ENCODE measurements at regions of chr3 and their contacts with region 1.

Region 1: GRCh38 chr3:98817547-98818041 is 54.5 kb downstream of the ST3GAL6 start:
- DNase-seq: peak in 3 of 14 experiments; percentile 32 to 53 (median 52)
- ATAC-seq: peak; percentile 80
- H3K4me3 ChIP-seq: no peak overlapping the region
- H3K4me3 Mint-ChIP-seq: no peak overlapping the region
- H3K27ac ChIP-seq: no peak overlapping the region
- H3K27ac Mint-ChIP-seq: no peak overlapping the region
- H3K4me1 ChIP-seq: no peaks in the 10 kb centered on the region
- H3K4me1 Mint-ChIP-seq: no peaks in the 10 kb centered on the region
- H3K27me3 ChIP-seq: no peaks in the 10 kb centered on the region
- H3K27me3 Mint-ChIP-seq: no peaks in the 10 kb centered on the region
- CTCF ChIP-seq: peak; percentile 72

Region 2: DNA sequence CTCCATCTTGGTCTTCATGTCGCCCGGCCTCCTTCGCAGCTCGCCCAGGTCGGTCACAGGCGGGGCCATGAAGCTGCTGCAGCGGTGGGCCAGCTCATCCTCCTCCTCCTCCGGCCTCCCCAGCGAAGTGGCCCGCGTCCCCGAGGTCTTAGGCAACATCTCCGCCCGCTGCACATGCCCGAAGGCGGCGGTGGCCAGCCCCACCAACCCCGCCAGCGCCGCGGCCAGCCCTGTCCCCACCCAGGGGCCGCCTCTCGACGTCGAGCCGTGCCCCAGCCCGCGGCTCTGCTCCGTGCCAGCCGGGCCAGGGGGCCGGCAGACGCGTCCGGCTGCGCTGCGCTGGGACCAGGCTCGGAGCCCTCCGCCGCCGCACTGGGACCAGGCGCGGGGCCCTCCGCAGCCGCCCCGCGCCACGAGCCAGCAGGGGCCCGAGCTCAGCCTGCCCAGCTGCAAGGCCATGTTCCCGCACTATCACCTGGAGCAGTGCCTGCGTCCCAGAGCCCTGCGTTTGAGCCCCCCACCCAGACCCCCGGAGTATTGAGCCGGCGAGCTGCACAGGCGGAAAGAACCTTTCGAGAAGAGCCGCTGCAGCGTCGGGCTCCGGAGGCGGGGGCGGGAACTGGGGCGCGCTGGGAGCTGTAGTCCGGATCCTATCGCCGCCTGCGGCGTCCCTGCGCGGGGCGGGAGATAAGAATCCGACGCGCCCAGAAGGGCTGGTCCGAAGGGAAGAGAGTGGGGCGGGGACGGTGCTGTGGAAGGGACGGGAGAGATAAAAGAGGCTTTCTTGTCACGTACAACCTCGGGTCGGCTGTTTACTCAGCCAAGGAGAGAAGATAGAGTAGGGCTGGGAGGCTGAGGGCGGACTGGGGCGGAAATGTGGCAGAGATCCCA is 224.3 kb before region 1 on chr3 and contains the start of gene CPOX:
- CTCF ChIA-PET with region 1: no interaction called
- POLR2A ChIA-PET with region 1: no interaction called
- intact Hi-C with region 1: loop called in 1 of 2 experiments (anchors 5 kb)
- DNase-seq: peak; percentile 61 to 91 (median 79)
- ATAC-seq: peak; percentile 96
- H3K4me3 ChIP-seq: peak within 1 kb of the TSS; percentile 63
- H3K4me3 Mint-ChIP-seq: peak within 1 kb of the TSS; percentile 94
- H3K27ac ChIP-seq: peak within 1 kb of the TSS in 1 of 2 donors; percentile 19
- H3K27ac Mint-ChIP-seq: peak within 1 kb of the TSS; percentile 82
- H3K4me1 ChIP-seq: peaks cover 16% of the 10 kb centered on the region
- H3K4me1 Mint-ChIP-seq: peaks cover 35% of the 10 kb centered on the region
- H3K27me3 ChIP-seq: no peaks in the 10 kb centered on the region
- H3K27me3 Mint-ChIP-seq: no peaks in the 10 kb centered on the region
- CTCF ChIP-seq: no peak
- total RNA-seq, gene CPOX: 7.0 to 10.5 TPM

Region 3: GRCh38 chr3:98798820-98799219 is 18.8 kb before region 1 on chr3:
- CTCF ChIA-PET with region 1: no interaction called
- POLR2A ChIA-PET with region 1: no interaction called
- intact Hi-C with region 1: no loop called
- DNase-seq: no peak
- ATAC-seq: no peak
- H3K4me3 ChIP-seq: no peak overlapping the region
- H3K4me3 Mint-ChIP-seq: no peak overlapping the region
- H3K27ac ChIP-seq: no peak overlapping the region
- H3K27ac Mint-ChIP-seq: no peak overlapping the region
- H3K4me1 ChIP-seq: no peaks in the 10 kb centered on the region
- H3K4me1 Mint-ChIP-seq: no peaks in the 10 kb centered on the region
- H3K27me3 ChIP-seq: no peaks in the 10 kb centered on the region
- H3K27me3 Mint-ChIP-seq: no peaks in the 10 kb centered on the region
- CTCF ChIP-seq: no peak

Region 4: DNA sequence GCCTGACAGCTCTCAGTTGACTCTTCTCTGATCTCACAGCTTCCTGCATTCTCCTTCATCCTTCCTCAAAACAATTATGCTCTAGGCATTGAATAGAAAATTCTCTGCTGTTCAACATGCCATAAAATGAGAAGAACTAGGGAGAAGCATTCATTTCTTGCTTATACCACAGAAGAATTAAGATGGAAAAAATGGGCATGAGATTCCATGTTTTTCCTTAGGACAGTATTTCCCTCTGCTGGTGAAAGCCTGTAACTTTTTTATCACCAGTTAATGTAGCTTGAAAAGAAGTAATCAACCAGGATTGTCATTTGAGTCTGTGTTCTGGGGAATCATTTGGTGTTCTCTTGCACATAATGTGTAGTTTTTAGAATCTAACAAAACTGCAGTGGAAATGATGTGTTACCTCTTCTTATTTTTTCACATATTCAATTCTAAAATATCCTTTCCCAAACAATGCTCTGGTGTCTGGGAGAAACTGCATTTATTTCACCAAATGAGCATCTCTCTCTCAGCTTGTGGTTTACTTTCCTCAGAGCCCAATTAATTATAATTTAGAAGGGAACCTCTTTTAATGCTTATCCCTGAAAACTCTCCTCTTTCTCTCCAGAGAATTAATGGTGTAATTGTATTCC is 176.7 kb after region 1 on chr3:
- CTCF ChIA-PET with region 1: no interaction called
- POLR2A ChIA-PET with region 1: no interaction called
- intact Hi-C with region 1: loop called in 1 of 2 experiments (anchors 5 kb)
- DNase-seq: no peak
- ATAC-seq: no peak
- H3K4me3 ChIP-seq: no peak overlapping the region
- H3K4me3 Mint-ChIP-seq: no peak overlapping the region
- H3K27ac ChIP-seq: no peak overlapping the region
- H3K27ac Mint-ChIP-seq: no peak overlapping the region
- H3K4me1 ChIP-seq: no peaks in the 10 kb centered on the region
- H3K4me1 Mint-ChIP-seq: no peaks in the 10 kb centered on the region
- H3K27me3 ChIP-seq: no peaks in the 10 kb centered on the region
- H3K27me3 Mint-ChIP-seq: no peaks in the 10 kb centered on the region
- CTCF ChIP-seq: peak; percentile 16

Region 5: GRCh38 chr3:99686955-99687612 is 869.5 kb after region 1 on chr3:
- CTCF ChIA-PET with region 1: no interaction called
- POLR2A ChIA-PET with region 1: no interaction called
- intact Hi-C with region 1: loop called (anchors 1 to 2 kb)
- DNase-seq: peak in 7 of 14 experiments; percentile 1 to 23 (median 5)
- ATAC-seq: no peak
- H3K4me3 ChIP-seq: no peak overlapping the region
- H3K4me3 Mint-ChIP-seq: no peak overlapping the region
- H3K27ac ChIP-seq: no peak overlapping the region
- H3K27ac Mint-ChIP-seq: no peak overlapping the region
- H3K4me1 ChIP-seq: no peaks in the 10 kb centered on the region
- H3K4me1 Mint-ChIP-seq: no peaks in the 10 kb centered on the region
- H3K27me3 ChIP-seq: no peaks in the 10 kb centered on the region
- H3K27me3 Mint-ChIP-seq: peaks cover 20% of the 10 kb centered on the region
- CTCF ChIP-seq: peak; percentile 40

Region 6: DNA sequence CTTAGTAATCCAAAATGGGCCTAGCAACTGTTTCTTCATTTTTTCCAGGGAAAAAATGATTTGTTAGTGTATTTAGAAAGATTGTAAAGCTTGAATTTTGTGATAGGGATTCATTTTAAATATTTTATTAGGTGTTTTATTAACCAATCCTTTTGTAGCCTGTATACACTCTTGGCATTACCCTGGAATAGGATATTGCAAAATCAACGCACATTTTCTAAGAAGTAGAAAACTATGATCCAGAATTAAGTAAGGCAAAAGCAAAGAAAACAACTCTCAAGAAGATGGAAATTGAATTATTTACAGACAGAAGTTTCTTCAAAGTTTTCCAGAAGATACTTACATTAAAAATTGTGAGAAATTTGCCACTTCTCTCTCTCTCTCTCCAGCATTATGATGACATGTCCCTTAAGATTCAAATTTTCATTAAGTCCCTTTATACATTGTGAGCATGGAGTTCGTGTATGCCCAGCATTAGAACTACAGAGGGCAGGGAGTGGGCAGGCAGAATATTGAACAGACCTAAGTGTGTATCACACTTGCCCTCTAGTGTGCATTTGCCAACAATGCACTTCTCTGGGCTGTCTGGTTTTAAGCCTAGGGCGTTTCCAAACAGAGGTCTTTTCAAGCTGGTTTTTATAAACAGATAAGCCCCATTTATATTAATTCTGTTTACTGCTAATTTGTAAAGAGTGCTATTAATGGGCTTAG is 971.6 kb after region 1 on chr3:
- CTCF ChIA-PET with region 1: no interaction called
- POLR2A ChIA-PET with region 1: no interaction called
- intact Hi-C with region 1: loop called in 1 of 2 experiments (anchors 10 kb)
- DNase-seq: peak in 2 of 14 experiments; percentile 29 to 36
- ATAC-seq: peak; percentile 69
- H3K4me3 ChIP-seq: no peak overlapping the region
- H3K4me3 Mint-ChIP-seq: no peak overlapping the region
- H3K27ac ChIP-seq: no peak overlapping the region
- H3K27ac Mint-ChIP-seq: no peak overlapping the region
- H3K4me1 ChIP-seq: no peaks in the 10 kb centered on the region
- H3K4me1 Mint-ChIP-seq: no peaks in the 10 kb centered on the region
- H3K27me3 ChIP-seq: no peaks in the 10 kb centered on the region
- H3K27me3 Mint-ChIP-seq: no peaks in the 10 kb centered on the region
- CTCF ChIP-seq: peak; percentile 47

Region 7: DNA sequence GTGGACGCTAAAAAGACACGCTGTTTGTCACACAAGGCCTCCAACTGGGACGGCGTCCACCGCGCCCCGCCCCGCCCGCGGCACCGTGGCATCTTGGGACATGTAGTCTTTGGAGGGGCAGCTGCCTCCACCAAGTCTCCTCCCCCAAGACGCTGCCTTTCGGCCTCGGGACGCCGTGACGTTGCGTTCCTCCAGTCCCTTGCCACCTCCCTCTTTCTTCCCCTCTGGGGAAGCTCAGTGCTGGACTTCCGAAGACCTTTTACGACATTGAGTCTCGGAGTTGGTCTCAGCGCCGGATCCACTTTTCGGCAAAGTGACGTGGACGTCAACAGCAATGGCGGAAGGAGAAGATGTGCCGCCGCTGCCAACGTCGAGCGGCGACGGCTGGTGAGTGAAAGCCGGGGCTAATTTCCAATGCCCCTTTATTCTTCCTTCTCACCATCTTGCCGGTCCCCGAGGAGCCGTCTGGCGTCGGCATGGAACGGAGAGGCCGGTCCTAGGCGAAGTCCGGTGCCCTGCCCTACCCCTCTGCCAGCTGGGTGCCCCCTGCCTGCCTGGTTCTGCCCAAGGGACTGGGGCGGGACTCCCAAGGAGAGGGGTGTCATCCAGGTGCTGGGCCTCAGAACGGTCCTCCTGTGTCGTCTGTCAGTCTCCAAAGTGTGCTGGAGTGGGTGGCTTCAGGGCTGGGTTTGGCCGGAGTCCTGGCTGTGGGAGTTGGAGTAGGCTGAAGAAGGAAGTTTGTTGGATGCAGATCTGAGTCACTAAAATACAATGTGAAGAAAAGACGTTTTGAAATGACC is 1443.3 kb after region 1 on chr3 and contains the start of gene TBC1D23:
- CTCF ChIA-PET with region 1: no interaction called
- POLR2A ChIA-PET with region 1: no interaction called
- intact Hi-C with region 1: loop called in 1 of 2 experiments (anchors 5 kb)
- DNase-seq: peak; percentile 93 to 99 (median 96)
- ATAC-seq: peak; percentile 99
- H3K4me3 ChIP-seq: peak within 1 kb of the TSS; percentile 96
- H3K4me3 Mint-ChIP-seq: peak within 1 kb of the TSS; percentile 96
- H3K27ac ChIP-seq: peak within 1 kb of the TSS; percentile 78 to 97
- H3K27ac Mint-ChIP-seq: peak within 1 kb of the TSS; percentile 94
- H3K4me1 ChIP-seq: peaks cover 26% of the 10 kb centered on the region
- H3K4me1 Mint-ChIP-seq: peaks cover 64% of the 10 kb centered on the region
- H3K27me3 ChIP-seq: no peaks in the 10 kb centered on the region
- H3K27me3 Mint-ChIP-seq: no peaks in the 10 kb centered on the region
- CTCF ChIP-seq: no peak
- total RNA-seq, gene TBC1D23: 31.8 to 34.8 TPM